ENCODE measurements at regions of chr4 and their contacts with region 1.

Region 1: GRCh38 chr4:95107635-95108034 is 349.9 kb downstream of the BMPR1B start:
- ATAC-seq: peak in 2 of 8 experiments; percentile 32 to 52
- H3K4me3 ChIP-seq: no peak overlapping the region
- H3K27ac ChIP-seq: no peak overlapping the region
- H3K4me1 ChIP-seq: no peaks in the 10 kb centered on the region

Region 2: DNA sequence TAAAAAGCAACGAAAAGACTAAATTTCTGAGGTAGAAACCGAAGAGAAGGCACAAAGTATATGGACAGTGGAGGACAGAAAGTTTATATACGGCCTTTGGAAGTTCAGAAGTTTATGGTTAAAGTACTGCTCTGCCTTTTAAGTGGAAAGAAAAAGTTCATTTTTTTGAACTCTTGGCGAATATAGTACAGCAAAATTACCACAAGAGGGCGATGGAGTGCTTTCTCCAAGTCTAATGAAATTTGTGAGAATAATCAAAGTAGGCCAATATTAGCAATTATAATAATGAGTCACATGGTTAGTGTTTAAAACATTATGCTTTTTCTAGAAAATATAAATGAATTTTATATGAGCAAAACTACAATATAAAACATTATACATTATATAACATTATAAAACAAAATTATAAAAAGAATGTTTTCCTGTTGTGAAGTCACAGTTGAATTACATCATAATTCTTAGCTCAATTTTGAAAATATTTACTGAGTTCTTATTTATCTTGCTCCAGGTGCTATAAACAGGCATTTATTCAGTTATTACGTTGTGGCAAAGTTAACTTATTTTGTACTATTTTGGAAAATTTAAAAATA is 486.0 kb before region 1 on chr4:
- in situ Hi-C with region 1: loop called in 6 of 9 experiments (anchors 10 to 25 kb)
- ATAC-seq: peak in 1 of 8 experiments; percentile 41
- H3K4me3 ChIP-seq: no peak overlapping the region
- H3K27ac ChIP-seq: no peak overlapping the region
- H3K4me1 ChIP-seq: no peaks in the 10 kb centered on the region

Region 3: GRCh38 chr4:94635177-94635576 is 472.5 kb before region 1 on chr4:
- in situ Hi-C with region 1: loop called in 3 of 9 experiments (anchors 10 to 25 kb)
- ATAC-seq: no peak
- H3K4me3 ChIP-seq: no peak overlapping the region
- H3K27ac ChIP-seq: no peak overlapping the region
- H3K4me1 ChIP-seq: no peaks in the 10 kb centered on the region

Measured in motor neuron (in vitro differentiated cells).